Dorsolateral prefrontal cortex (tissue), 120 donors: ENCODE measurements at regions of chr15 and their contacts with region 1.

Region 1: DNA sequence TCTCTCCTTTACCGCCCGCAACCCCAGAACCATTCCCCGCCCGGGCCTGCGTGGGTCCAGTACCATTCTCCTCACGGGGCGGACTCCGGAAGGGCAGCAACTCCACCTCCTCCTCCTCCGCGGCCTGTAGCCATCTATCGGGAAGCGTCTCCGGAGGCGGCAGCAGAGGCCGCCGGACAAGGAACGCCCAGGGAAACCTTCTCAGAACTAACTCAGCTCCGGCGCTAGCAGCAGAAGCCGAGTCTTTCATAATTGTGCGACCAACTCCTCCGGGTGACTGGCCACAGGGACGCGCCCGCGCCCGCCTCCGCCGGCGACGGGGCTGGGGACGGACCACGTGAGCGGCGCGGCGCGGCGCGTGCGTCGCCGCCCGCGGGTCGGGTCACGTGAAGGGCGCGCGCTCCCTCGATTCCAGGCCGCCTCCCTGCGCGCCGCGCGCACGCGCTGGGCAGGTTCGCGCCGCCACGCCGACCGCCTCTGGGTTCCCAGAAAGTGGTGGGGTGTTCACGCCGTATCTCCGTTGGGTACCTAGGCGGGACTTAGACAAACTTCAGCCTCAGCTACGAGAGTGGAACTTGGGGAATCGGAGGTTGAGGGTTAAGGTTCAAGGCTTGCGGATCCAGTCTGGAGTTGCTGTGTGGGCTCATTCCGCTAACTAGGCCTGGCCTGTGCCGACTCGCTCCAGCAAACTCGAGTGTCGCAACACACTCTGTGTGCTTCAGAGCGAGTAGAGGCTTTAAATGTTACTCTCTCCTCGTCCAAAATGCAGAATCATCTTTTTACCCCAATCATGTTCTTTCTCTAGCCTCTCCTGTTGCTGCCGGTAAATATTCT is at the start of gene TRPM7:
- DNase-seq: peak; percentile 67 to 91 (median 82)
- H3K4me3 ChIP-seq: peak within 1 kb of the TSS; percentile 58 to 99 (median 91)
- H3K27ac ChIP-seq: peak within 1 kb of the TSS; percentile 66 to 98 (median 94)
- H3K27me3 ChIP-seq: no peaks in the 10 kb centered on the region
- CTCF ChIP-seq: peak in 29 of 56 donors; percentile 1 to 63 (median 20)
- total RNA-seq, gene TRPM7: 25.9 to 59.0 (median 38.1) TPM

Region 2: DNA sequence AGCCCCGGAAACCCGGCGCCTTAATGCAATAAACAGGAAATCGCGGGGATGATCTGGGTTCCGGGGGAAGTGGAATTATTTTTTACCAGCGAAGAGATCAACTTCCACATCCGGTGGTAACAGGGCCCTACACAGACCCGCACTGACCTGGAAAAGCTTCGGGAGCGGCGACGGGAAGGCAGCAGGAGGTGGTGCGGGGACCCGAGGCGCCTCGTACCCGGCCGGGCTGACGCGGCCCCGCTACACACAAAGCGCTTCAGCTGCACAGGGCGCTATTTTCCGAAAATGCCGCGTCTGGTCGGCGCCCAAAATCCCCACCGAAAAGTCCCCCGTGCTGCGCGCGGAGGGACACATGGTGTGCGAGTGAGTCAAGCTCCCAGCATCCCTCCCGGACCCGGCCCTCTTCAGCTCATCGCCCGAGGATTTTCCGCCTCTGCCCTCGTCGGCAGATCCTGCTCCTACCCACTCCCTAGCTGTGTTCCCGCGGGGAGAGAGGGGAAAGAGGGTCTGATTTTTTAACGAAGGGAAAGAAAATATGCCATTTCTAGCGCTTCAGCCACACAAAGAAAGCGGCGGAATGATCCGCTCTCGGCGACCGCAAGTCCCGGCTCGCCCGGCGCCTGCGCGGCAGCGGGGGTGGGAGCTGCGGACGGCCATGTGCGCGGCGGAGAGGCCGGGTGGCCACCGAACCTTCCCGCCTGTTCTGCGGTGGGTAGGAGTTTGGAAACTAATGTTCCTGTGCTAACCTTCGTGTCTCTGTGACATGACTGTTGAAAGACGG is 331.7 kb before region 1 on chr15 and contains the start of gene GABPB1:
- intact Hi-C with region 1: loop called (anchors 10 kb)
- DNase-seq: peak; percentile 76 to 90 (median 84)
- H3K4me3 ChIP-seq: peak within 1 kb of the TSS; percentile 70 to 100 (median 93)
- H3K27ac ChIP-seq: peak within 1 kb of the TSS; percentile 87 to 100 (median 98)
- H3K27me3 ChIP-seq: no peaks in the 10 kb centered on the region
- CTCF ChIP-seq: peak in 14 of 56 donors; percentile 3 to 35 (median 10)
- total RNA-seq, gene GABPB1: 7.9 to 16.9 (median 11.0) TPM

Region 3: GRCh38 chr15:50675536-50676144 is 11.0 kb before region 1 on chr15:
- intact Hi-C with region 1: loop called in 1 of 2 experiments (anchors 1 kb)
- DNase-seq: no peak
- H3K4me3 ChIP-seq: no peak overlapping the region
- H3K27ac ChIP-seq: no peak overlapping the region
- H3K27me3 ChIP-seq: no peaks in the 10 kb centered on the region
- CTCF ChIP-seq: peak; percentile 68 to 96 (median 84)

Region 4: GRCh38 chr15:50765195-50765973 is 78.7 kb after region 1 on chr15 and contains the start of gene SPPL2A:
- intact Hi-C with region 1: loop called (anchors 2 to 5 kb)
- DNase-seq: peak; percentile 53 to 89 (median 74)
- H3K4me3 ChIP-seq: peak within 1 kb of the TSS; percentile 61 to 95 (median 88)
- H3K27ac ChIP-seq: peak within 1 kb of the TSS; percentile 57 to 96 (median 90)
- H3K27me3 ChIP-seq: no peaks in the 10 kb centered on the region
- CTCF ChIP-seq: peak in 11 of 56 donors; percentile 4 to 33 (median 15)
- total RNA-seq, gene SPPL2A: 29.9 to 66.0 (median 45.8) TPM

Region 5: DNA sequence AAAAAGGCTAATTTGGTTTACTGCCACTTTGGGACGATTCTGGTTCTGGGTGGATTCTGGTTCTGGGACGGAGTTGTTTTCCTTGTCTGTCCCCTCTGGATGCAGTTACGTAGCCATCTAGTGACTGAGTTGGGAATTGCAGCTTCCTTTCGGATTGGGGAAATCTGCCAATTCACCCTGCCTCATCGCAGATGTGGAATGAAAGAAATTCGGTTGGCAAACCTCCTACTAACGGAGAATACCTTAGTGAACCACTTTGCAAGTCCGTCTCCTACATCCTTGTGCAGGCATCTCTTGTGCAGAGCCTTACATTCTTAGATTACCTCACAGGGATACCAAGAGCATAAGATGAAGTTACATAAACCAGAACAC is 190.3 kb after region 1 on chr15:
- intact Hi-C with region 1: loop called (anchors 2 to 5 kb)
- DNase-seq: peak in 8 of 10 donors; percentile 55 to 82 (median 60)
- H3K4me3 ChIP-seq: peak overlapping the region; percentile 8 to 68 (median 49)
- H3K27ac ChIP-seq: peak overlapping the region in 20 of 59 donors; percentile 4 to 72 (median 39)
- H3K27me3 ChIP-seq: no peaks in the 10 kb centered on the region
- CTCF ChIP-seq: peak; percentile 89 to 99 (median 95)